Mammary epithelial cell (primary cell): ENCODE measurements at regions of chr1 and their contacts with region 1.

Region 1: GRCh38 chr1:180598333-180598974 is 33.4 kb upstream of the XPR1 start:
- DNase-seq: no peak
- H3K4me3 ChIP-seq: no peak overlapping the region
- H3K27ac ChIP-seq: no peak overlapping the region
- H3K4me1 ChIP-seq: peaks cover 3% of the 10 kb centered on the region
- H3K27me3 ChIP-seq: no peaks in the 10 kb centered on the region
- CTCF ChIP-seq: no peak

Region 2: GRCh38 chr1:180527101-180527669 is 71.3 kb before region 1 on chr1:
- CTCF ChIA-PET with region 1: no interaction called
- dilution Hi-C with region 1: loop called (anchors 10 kb)
- in situ Hi-C with region 1: no loop called
- intact Hi-C with region 1: no loop called
- DNase-seq: peak; percentile 66
- H3K4me3 ChIP-seq: no peak overlapping the region
- H3K27ac ChIP-seq: no peak overlapping the region
- H3K4me1 ChIP-seq: peaks cover 61% of the 10 kb centered on the region
- H3K27me3 ChIP-seq: no peaks in the 10 kb centered on the region
- CTCF ChIP-seq: no peak

Region 3: GRCh38 chr1:181044449-181044966 is 446.1 kb after region 1 on chr1:
- CTCF ChIA-PET with region 1: no interaction called
- dilution Hi-C with region 1: no loop called
- in situ Hi-C with region 1: no loop called
- intact Hi-C with region 1: no loop called
- DNase-seq: peak; percentile 97
- H3K4me3 ChIP-seq: peak overlapping the region in 1 of 3 experiments; percentile 7
- H3K27ac ChIP-seq: peak overlapping the region; percentile 65
- H3K4me1 ChIP-seq: peaks cover 30% of the 10 kb centered on the region
- H3K27me3 ChIP-seq: no peaks in the 10 kb centered on the region
- CTCF ChIP-seq: no peak